ENCODE measurements at regions of chr11 and their contacts with region 1.

Region 1: GRCh38 chr11:6531267-6531752 is 34.2 kb downstream of the DNHD1 start:
- DNase-seq: peak; percentile 31
- ATAC-seq: peak; percentile 46; the same call in 1 of the 3 replicates
- H3K4me3 ChIP-seq: no peak overlapping the region
- H3K27ac ChIP-seq: no peak overlapping the region
- H3K4me1 ChIP-seq: no peaks in the 10 kb centered on the region
- H3K27me3 ChIP-seq: no peaks in the 10 kb centered on the region
- CTCF ChIP-seq: peak; percentile 83
- EP300 ChIP-seq: no peak
- POLR2A ChIP-seq: no peak
- RAD21 ChIP-seq: peak; percentile 61

Region 2: GRCh38 chr11:6544921-6545850 is 13.9 kb after region 1 on chr11:
- CTCF ChIA-PET with region 1: no interaction called
- POLR2A ChIA-PET with region 1: no interaction called
- in situ Hi-C with region 1: no loop called
- intact Hi-C with region 1: no loop called
- DNase-seq: no peak
- ATAC-seq: no peak; the same call in 2 of the 3 replicates
- H3K4me3 ChIP-seq: no peak overlapping the region
- H3K27ac ChIP-seq: no peak overlapping the region
- H3K4me1 ChIP-seq: no peaks in the 10 kb centered on the region
- H3K27me3 ChIP-seq: no peaks in the 10 kb centered on the region
- CTCF ChIP-seq: no peak
- EP300 ChIP-seq: no peak
- POLR2A ChIP-seq: no peak
- RAD21 ChIP-seq: no peak

Region 3: GRCh38 chr11:6635082-6635932 is 104.0 kb after region 1 on chr11:
- CTCF ChIA-PET with region 1: no interaction called
- POLR2A ChIA-PET with region 1: no interaction called
- in situ Hi-C with region 1: no loop called
- intact Hi-C with region 1: loop called (anchors 1 kb)
- DNase-seq: peak; percentile 40
- ATAC-seq: peak; percentile 56
- H3K4me3 ChIP-seq: peak overlapping the region in 1 of 3 experiments; percentile 44; a peak in 2 of 6 replicates
- H3K27ac ChIP-seq: peak overlapping the region; percentile 45
- H3K4me1 ChIP-seq: peaks cover 50% of the 10 kb centered on the region
- H3K27me3 ChIP-seq: peaks cover 7 to 52% of the 10 kb centered on the region in 2 experiments; a peak in 3 of 5 replicates
- CTCF ChIP-seq: no peak
- EP300 ChIP-seq: no peak
- POLR2A ChIP-seq: no peak
- RAD21 ChIP-seq: no peak

Region 4: DNA sequence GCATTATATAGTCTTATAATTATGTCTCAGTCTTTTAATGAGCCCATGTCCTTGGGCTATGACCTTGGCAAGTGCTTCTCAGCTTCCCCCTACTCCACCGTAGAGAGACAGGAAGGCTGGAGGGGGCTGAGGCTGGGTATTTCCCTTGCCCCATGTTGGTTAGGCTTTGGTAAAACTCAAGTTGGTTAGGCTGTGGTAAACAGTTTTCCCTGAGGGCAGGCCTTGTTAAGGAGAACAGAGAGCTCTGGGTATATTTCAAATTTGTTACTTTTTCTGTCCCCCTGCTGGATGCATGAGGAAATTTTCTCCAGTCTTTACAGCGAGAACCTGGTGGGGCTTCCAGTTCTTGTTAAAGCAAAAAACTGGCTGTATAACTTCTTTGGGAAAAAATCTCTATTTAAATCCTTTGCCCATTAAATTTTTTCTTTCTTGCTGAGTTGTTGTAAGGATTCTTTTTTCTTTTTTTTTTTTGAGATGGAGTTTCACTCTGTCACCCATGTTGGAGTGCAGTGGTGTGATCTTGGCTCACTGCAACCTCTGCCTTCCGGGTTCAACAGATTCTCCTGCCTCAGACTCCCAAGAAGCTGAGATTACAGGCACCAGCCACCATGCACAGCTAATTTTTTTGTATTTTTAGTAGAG is 136.5 kb after region 1 on chr11:
- CTCF ChIA-PET with region 1: interaction called, 9 read pairs
- POLR2A ChIA-PET with region 1: no interaction called
- in situ Hi-C with region 1: no loop called
- intact Hi-C with region 1: loop called (anchors 5 kb)
- DNase-seq: peak; percentile 41
- ATAC-seq: peak; percentile 83
- H3K4me3 ChIP-seq: no peak overlapping the region
- H3K27ac ChIP-seq: no peak overlapping the region
- H3K4me1 ChIP-seq: no peaks in the 10 kb centered on the region
- H3K27me3 ChIP-seq: peaks cover 0 to 13% of the 10 kb centered on the region in 2 experiments; a peak in 2 of 5 replicates
- CTCF ChIP-seq: peak; percentile 43
- EP300 ChIP-seq: no peak
- POLR2A ChIP-seq: no peak
- RAD21 ChIP-seq: no peak; the same call in 1 of the 2 replicates

Region 5: GRCh38 chr11:6705905-6706535 is 174.7 kb after region 1 on chr11:
- CTCF ChIA-PET with region 1: interaction called, 16 read pairs
- POLR2A ChIA-PET with region 1: no interaction called
- in situ Hi-C with region 1: no loop called
- intact Hi-C with region 1: loop called (anchors 1 kb)
- DNase-seq: peak; percentile 20
- ATAC-seq: peak; percentile 67
- H3K4me3 ChIP-seq: no peak overlapping the region
- H3K27ac ChIP-seq: no peak overlapping the region
- H3K4me1 ChIP-seq: no peaks in the 10 kb centered on the region
- H3K27me3 ChIP-seq: peaks cover 0 to 9% of the 10 kb centered on the region in 2 experiments; a peak in 2 of 5 replicates
- CTCF ChIP-seq: peak; percentile 69
- EP300 ChIP-seq: no peak
- POLR2A ChIP-seq: no peak
- RAD21 ChIP-seq: 0 out of 2 replicates have a peak, but pooled peaks have one; percentile 9

Measured in HepG2 (cell line).